Activated CD4-positive, alpha-beta memory T cell treated with anti-CD3 and anti-CD28 coated beads for 36 hours (primary cell): ENCODE measurements at regions of chr11 and their contacts with region 1.

Region 1: GRCh38 chr11:11036848-11037732 is 179.2 kb upstream of the ZBED5 start:
- DNase-seq: peak; percentile 23
- H3K4me3 Mint-ChIP-seq: no peak overlapping the region
- H3K27ac Mint-ChIP-seq: no peak overlapping the region
- H3K4me1 Mint-ChIP-seq: peaks cover 2% of the 10 kb centered on the region
- H3K27me3 Mint-ChIP-seq: peaks cover 2% of the 10 kb centered on the region

Region 2: DNA sequence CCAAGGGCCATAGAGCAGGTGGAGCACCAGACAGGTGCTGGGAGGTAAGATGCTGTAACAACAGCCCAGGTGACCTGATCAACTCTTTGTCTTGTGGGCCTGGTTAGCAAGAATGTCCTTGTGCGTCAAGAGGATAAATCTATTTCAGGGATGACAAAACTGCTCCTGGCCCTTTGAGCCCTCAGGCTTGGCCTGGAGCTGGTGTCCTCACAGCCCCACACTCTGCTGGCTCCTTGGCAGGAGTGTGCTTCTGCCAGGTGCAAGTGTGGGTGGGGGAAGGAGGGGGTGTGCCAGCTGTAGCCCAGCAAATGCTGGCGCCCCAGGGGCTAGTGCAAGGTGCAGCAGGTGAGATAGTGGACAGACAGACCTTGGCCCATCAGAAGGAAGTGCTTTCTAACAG is 562.5 kb before region 1 on chr11:
- CTCF ChIA-PET with region 1: no interaction called
- POLR2A ChIA-PET with region 1: no interaction called
- intact Hi-C with region 1: no loop called
- DNase-seq: no peak
- H3K4me3 Mint-ChIP-seq: no peak overlapping the region
- H3K27ac Mint-ChIP-seq: no peak overlapping the region
- H3K4me1 Mint-ChIP-seq: peaks cover 15% of the 10 kb centered on the region
- H3K27me3 Mint-ChIP-seq: no peaks in the 10 kb centered on the region

Region 3: DNA sequence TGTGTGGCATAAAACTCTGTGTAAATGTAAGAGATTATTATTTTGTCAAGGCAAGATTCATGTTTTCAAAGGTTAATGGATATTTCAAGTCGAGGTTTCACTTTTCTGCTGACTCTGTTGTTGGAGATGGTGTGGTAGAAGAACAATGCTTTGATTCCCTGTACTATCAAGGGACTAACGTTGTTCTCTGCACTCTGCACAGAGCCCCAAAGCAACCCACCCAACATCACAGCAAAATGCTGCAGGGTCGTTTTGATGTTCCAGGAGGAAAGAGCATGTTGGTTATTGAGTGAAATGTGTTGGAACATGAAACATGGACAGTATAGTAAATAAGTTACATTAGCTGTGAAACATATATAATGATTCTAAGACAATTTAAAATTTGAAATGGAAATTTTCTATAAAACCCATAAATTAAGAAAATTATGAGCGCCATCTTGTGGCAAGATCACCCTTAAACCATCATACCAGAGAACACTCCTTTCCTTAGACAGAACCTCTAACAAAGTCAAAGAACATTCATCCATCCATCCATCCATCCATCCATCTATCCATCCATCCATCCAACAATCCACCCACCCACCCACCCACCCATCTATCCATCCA is 14.9 kb before region 1 on chr11:
- CTCF ChIA-PET with region 1: interaction called, 52 read pairs
- POLR2A ChIA-PET with region 1: no interaction called
- intact Hi-C with region 1: no loop called
- DNase-seq: no peak
- H3K4me3 Mint-ChIP-seq: no peak overlapping the region
- H3K27ac Mint-ChIP-seq: no peak overlapping the region
- H3K4me1 Mint-ChIP-seq: no peaks in the 10 kb centered on the region
- H3K27me3 Mint-ChIP-seq: no peaks in the 10 kb centered on the region

Region 4: DNA sequence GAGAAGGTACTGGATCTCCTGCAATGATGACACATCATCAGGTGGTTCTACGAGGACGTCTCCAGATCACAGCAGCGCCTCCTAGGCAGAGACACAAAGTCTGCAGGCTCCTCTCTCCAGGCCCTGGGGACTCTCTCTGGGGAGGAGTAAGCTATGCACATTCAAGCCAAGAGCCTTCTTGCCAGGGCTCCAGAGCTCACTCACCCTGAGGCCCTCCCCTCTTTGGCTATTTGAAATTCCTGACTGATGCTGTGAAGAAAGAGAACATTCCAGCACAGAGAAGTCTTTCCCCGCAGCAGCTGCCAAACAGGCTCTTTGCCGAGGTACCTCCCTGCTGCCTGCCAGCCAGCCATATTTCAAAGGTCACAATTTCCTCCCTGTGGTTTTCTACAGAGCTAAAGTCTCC is 111.0 kb after region 1 on chr11:
- CTCF ChIA-PET with region 1: interaction called, 4 read pairs
- POLR2A ChIA-PET with region 1: no interaction called
- intact Hi-C with region 1: loop called (anchors 2 kb)
- DNase-seq: peak; percentile 58
- H3K4me3 Mint-ChIP-seq: no peak overlapping the region
- H3K27ac Mint-ChIP-seq: no peak overlapping the region
- H3K4me1 Mint-ChIP-seq: peaks cover 37% of the 10 kb centered on the region
- H3K27me3 Mint-ChIP-seq: no peaks in the 10 kb centered on the region

Region 5: GRCh38 chr11:11157185-11157584 is 120.1 kb after region 1 on chr11:
- CTCF ChIA-PET with region 1: interaction called, 6 read pairs
- POLR2A ChIA-PET with region 1: no interaction called
- intact Hi-C with region 1: loop called (anchors 2 kb)
- DNase-seq: peak; percentile 59
- H3K4me3 Mint-ChIP-seq: no peak overlapping the region
- H3K27ac Mint-ChIP-seq: no peak overlapping the region
- H3K4me1 Mint-ChIP-seq: peaks cover 14% of the 10 kb centered on the region
- H3K27me3 Mint-ChIP-seq: peaks cover 2% of the 10 kb centered on the region

Region 6: DNA sequence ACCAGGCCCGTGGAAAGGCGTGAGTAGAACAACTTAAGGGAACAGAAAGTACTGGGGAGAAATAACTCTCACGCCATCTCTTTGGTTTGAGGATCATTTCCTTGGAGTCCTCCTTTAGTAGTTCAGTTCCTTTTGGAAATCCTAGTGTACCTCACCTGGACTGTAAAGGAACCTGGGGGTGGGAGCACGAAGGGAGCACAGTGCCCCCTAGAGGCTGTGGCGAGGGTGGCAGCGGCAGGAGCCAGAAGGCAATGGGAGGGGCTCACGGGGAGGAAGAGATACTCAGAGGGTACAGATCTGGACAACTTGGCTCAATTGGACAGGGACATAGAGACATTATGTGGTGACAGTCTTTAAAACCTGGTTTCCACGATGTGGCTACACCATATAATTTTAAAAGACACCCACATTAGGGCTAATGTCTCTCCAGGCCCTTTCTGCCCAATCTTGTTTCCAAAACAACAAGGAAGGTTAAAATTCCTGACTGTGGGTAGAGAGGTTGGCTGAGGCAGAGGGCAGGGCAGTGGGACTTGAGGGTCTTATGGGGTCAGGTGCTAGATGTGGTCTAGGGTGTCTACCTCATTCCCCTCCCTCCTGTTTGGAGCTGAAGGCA is 229.0 kb after region 1 on chr11:
- CTCF ChIA-PET with region 1: interaction called, 15 read pairs
- POLR2A ChIA-PET with region 1: no interaction called
- intact Hi-C with region 1: loop called (anchors 1 kb)
- DNase-seq: peak; percentile 79
- H3K4me3 Mint-ChIP-seq: no peak overlapping the region
- H3K27ac Mint-ChIP-seq: no peak overlapping the region
- H3K4me1 Mint-ChIP-seq: no peaks in the 10 kb centered on the region
- H3K27me3 Mint-ChIP-seq: no peaks in the 10 kb centered on the region